ENCODE measurements at regions of chr11 and their contacts with region 1.

Region 1: GRCh38 chr11:118659314-118659952 is 20.0 kb downstream of the TREH start:
- DNase-seq: peak; percentile 88 to 100
- H3K4me3 ChIP-seq: no peak overlapping the region
- H3K27ac ChIP-seq: no peak overlapping the region
- H3K4me1 ChIP-seq: peaks cover 0 to 27% (median 22%) of the 10 kb centered on the region in 4 experiments; a peak in 6 of 7 replicates
- H3K27me3 ChIP-seq: no peaks in the 10 kb centered on the region
- CTCF ChIP-seq: peak; percentile 90 to 99 (median 99)
- EP300 ChIP-seq: peak in 1 of 2 experiments; percentile 55; a peak in 1 of 3 replicates
- POLR2A ChIP-seq: no peak
- RAD21 ChIP-seq: peak; percentile 86 to 88

Region 2: GRCh38 chr11:118503216-118503615 is 156.2 kb before region 1 on chr11:
- CTCF ChIA-PET with region 1: no interaction called
- POLR2A ChIA-PET with region 1: no interaction called
- DNase-seq: no peak
- H3K4me3 ChIP-seq: no peak overlapping the region
- H3K27ac ChIP-seq: no peak overlapping the region
- H3K4me1 ChIP-seq: no peaks in the 10 kb centered on the region
- H3K27me3 ChIP-seq: no peaks in the 10 kb centered on the region
- CTCF ChIP-seq: no peak
- EP300 ChIP-seq: no peak
- POLR2A ChIP-seq: no peak
- RAD21 ChIP-seq: no peak

Region 3: GRCh38 chr11:118560806-118561205 is 98.6 kb before region 1 on chr11:
- CTCF ChIA-PET with region 1: no interaction called
- POLR2A ChIA-PET with region 1: no interaction called
- DNase-seq: no peak
- H3K4me3 ChIP-seq: no peak overlapping the region
- H3K27ac ChIP-seq: no peak overlapping the region
- H3K4me1 ChIP-seq: peaks cover 0 to 2% (median 0%) of the 10 kb centered on the region in 4 experiments; a peak in 1 of 7 replicates
- H3K27me3 ChIP-seq: no peaks in the 10 kb centered on the region
- CTCF ChIP-seq: no peak
- EP300 ChIP-seq: no peak
- POLR2A ChIP-seq: no peak
- RAD21 ChIP-seq: no peak

Region 4: GRCh38 chr11:118592616-118593367 is 66.6 kb before region 1 on chr11:
- CTCF ChIA-PET with region 1: interaction called, 63 read pairs
- POLR2A ChIA-PET with region 1: no interaction called
- DNase-seq: no peak
- H3K4me3 ChIP-seq: no peak overlapping the region
- H3K27ac ChIP-seq: no peak overlapping the region
- H3K4me1 ChIP-seq: no peaks in the 10 kb centered on the region
- H3K27me3 ChIP-seq: no peaks in the 10 kb centered on the region
- CTCF ChIP-seq: no peak
- EP300 ChIP-seq: no peak
- POLR2A ChIP-seq: no peak
- RAD21 ChIP-seq: no peak

Region 5: DNA sequence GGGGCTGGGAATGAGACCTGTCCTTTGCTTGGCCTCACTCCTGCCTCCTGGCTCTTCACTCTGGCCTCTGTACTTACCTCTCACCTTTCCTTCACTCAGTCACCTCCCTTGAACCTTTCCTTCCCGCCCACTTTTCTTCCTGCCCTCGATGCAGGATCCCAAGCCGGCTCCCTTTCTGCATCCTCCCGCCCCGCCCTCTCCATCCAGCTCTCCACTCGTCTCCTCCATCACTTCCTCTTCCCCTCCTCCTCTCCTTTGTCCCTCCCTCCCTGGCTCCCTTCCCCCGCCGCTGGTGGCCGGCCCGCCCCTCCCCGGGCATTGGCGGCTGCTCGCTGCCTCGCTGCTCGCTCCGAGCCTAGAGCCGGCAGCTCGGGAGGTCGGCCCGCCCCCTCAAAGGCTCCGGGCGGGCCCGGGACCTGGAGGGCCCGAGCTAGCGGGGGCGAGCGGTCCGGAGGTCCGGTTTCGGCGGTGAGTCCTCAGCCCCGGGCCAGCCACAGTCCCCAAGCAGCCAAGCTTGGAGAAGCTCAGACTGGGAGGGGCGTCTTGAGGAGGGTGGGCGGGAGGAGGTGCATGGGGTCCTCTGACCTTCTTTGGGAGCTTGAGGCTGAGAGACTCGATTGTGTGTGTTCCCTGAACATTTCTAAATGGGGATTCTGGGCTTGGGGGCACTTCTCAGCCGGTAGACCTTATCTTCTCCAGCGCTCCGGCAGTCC is 38.2 kb before region 1 on chr11:
- CTCF ChIA-PET with region 1: interaction called, 18 read pairs
- POLR2A ChIA-PET with region 1: interaction called, 6 read pairs
- DNase-seq: peak in 1 of 2 experiments; percentile 89
- H3K4me3 ChIP-seq: peak overlapping the region; percentile 41 to 82 (median 70)
- H3K27ac ChIP-seq: peak overlapping the region; percentile 50; the same call in 1 of the 2 replicates
- H3K4me1 ChIP-seq: peaks cover 5 to 39% (median 30%) of the 10 kb centered on the region in 4 experiments
- H3K27me3 ChIP-seq: no peaks in the 10 kb centered on the region
- CTCF ChIP-seq: no peak
- EP300 ChIP-seq: peak in 1 of 2 experiments; percentile 20; a peak in 1 of 3 replicates
- POLR2A ChIP-seq: peak in 1 of 2 experiments; percentile 34; a peak in 1 of 3 replicates
- RAD21 ChIP-seq: no peak

Region 6: DNA sequence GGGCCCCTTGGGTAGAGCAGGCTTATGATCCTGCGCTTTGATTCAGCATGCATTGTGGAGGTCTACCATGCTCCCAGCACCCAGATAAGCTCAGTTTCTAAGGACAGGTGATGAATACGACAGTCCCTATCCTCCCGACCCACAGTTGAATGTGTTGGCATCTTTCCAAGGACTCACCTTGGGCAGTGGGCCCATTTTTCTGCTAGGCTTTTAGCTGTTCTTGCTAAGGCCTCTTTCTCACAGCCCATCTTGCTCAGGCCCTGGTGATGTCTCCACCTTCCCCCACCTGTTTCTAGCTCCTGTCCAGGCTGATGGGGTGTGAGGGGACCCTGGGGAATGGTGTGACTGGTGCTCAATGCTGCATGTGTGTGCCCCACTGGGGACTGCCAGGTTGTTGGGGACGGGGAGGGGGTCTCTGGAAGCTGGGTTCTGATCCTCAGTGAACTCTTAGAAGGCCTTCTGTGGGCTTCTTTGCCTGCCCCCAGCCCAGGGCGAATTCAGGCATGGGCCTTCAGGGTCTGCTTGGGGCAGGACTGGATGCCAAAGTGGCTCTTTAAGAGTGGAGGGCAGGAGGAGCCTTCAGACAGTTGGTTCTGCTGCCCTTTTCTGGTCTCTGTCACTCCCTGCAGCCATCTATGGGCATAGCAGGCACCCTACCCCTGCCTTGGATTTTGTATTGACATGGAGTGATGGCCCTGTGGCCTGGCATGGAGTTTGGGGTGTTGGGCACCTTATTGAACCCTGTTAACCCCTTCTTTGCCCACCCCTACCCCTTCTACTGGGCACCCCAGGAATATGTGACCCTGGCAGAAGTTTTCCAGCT is 18.9 kb before region 1 on chr11:
- CTCF ChIA-PET with region 1: interaction called, 89 read pairs
- POLR2A ChIA-PET with region 1: interaction called, 271 read pairs
- DNase-seq: no peak
- H3K4me3 ChIP-seq: no peak overlapping the region
- H3K27ac ChIP-seq: no peak overlapping the region
- H3K4me1 ChIP-seq: peaks cover 5 to 9% (median 6%) of the 10 kb centered on the region in 4 experiments; a peak in 6 of 7 replicates
- H3K27me3 ChIP-seq: no peaks in the 10 kb centered on the region
- CTCF ChIP-seq: peak; percentile 5 to 35 (median 26); a peak in 3 of 4 replicates
- EP300 ChIP-seq: no peak
- POLR2A ChIP-seq: no peak
- RAD21 ChIP-seq: peak; percentile 41 to 57

Region 7: DNA sequence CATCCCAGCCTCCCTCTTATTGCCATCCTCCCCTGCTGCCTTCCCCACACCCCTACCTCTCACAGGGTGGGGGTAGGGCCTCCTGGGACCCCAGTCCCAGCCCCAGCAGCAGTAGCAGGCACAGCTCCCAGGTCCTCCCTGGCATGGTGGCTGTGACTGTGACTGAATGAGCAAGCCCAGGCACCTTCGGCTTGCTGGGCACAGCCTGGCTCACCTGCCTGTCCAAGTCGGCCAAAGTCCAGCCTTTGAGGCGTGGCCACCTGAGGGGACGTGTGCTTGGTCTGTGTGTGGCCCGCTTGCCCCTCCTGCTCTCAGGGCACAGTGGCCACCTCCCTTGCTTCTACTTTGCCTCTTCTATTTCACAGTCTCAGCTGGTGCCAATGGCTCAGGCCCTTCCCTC is 20.1 kb after region 1 on chr11 and contains the start of gene TREH:
- CTCF ChIA-PET with region 1: interaction called, 86 read pairs
- POLR2A ChIA-PET with region 1: interaction called, 5 read pairs
- DNase-seq: no peak
- H3K4me3 ChIP-seq: no peak within 1 kb of the TSS
- H3K27ac ChIP-seq: no peak within 1 kb of the TSS
- H3K4me1 ChIP-seq: peaks cover 0 to 3% (median under 1%) of the 10 kb centered on the region in 4 experiments; a peak in 2 of 7 replicates
- H3K27me3 ChIP-seq: no peaks in the 10 kb centered on the region
- CTCF ChIP-seq: no peak
- EP300 ChIP-seq: no peak
- POLR2A ChIP-seq: no peak
- RAD21 ChIP-seq: no peak
- total RNA-seq, gene TREH: not detected in 2 replicates